HepG2 (cell line): ENCODE measurements at regions of chr6 and their contacts with region 1.

Region 1: DNA sequence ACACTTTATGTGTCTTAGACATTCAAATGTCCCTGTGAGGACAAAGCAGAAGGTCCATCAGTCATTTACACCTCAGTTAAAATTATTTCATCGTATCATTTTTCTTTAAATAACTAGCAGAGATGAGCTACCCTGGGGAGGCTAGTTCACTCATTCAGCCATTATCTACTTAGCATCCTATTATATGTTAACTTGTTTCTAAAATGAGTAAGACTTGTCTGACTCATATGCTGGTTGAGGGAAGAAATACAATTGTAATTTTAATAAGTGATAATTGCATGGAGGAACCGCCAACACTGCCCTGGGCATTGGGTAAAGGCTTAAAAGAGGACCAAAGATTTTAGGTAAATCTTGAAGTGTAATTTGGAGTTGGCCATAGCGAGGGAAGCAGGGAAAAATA is 12.4 kb upstream of the PTPRK start:
- DNase-seq: no peak
- ATAC-seq: no peak
- H3K4me3 ChIP-seq: no peak overlapping the region
- H3K27ac ChIP-seq: no peak overlapping the region
- H3K4me1 ChIP-seq: no peaks in the 10 kb centered on the region
- H3K27me3 ChIP-seq: peaks cover 0 to 9% of the 10 kb centered on the region in 2 experiments; a peak in 1 of 5 replicates
- CTCF ChIP-seq: no peak
- EP300 ChIP-seq: no peak
- POLR2A ChIP-seq: no peak
- RAD21 ChIP-seq: no peak

Region 2: GRCh38 chr6:127869772-127870404 is 662.9 kb before region 1 on chr6:
- CTCF ChIA-PET with region 1: no interaction called
- POLR2A ChIA-PET with region 1: no interaction called
- in situ Hi-C with region 1: loop called (anchors 10 kb)
- intact Hi-C with region 1: no loop called
- DNase-seq: no peak
- ATAC-seq: no peak
- H3K4me3 ChIP-seq: no peak overlapping the region
- H3K27ac ChIP-seq: no peak overlapping the region
- H3K4me1 ChIP-seq: peaks cover 5% of the 10 kb centered on the region
- H3K27me3 ChIP-seq: no peaks in the 10 kb centered on the region
- CTCF ChIP-seq: no peak
- EP300 ChIP-seq: no peak
- POLR2A ChIP-seq: no peak
- RAD21 ChIP-seq: no peak

Region 3: GRCh38 chr6:128266946-128267345 is 265.9 kb before region 1 on chr6:
- CTCF ChIA-PET with region 1: no interaction called
- POLR2A ChIA-PET with region 1: no interaction called
- in situ Hi-C with region 1: no loop called
- intact Hi-C with region 1: no loop called
- DNase-seq: no peak
- ATAC-seq: no peak
- H3K4me3 ChIP-seq: no peak overlapping the region
- H3K27ac ChIP-seq: no peak overlapping the region
- H3K4me1 ChIP-seq: no peaks in the 10 kb centered on the region
- H3K27me3 ChIP-seq: no peaks in the 10 kb centered on the region
- CTCF ChIP-seq: no peak
- EP300 ChIP-seq: no peak
- POLR2A ChIP-seq: no peak
- RAD21 ChIP-seq: no peak

Region 4: DNA sequence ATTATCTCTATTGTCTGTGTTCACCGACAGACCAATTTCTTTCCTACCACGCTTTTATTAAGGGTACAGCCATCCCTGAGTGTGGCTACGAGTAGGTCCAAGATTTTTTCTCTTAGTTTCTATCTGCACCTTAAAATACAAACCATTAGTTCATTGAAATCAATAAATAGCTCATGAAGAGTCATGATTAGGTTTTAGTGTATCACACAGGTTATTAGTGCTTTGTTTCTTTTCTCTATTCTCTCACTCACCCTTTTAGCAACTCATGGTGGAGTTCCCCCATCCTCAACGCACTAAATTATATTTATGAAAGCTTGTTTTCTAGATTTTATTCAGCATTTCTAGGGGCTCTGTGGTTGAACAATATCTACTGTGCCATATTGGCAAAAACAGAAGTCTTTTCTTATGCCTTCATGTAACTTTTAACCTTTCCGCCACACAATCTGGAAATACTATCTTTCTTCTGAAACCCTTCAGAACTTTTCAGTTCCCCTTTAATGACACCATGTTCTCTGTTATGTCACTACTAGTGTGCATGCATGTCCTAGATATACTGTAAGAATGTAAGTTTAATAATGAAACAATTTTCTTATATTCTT is 221.9 kb after region 1 on chr6:
- CTCF ChIA-PET with region 1: no interaction called
- POLR2A ChIA-PET with region 1: no interaction called
- in situ Hi-C with region 1: no loop called
- intact Hi-C with region 1: no loop called
- DNase-seq: no peak
- ATAC-seq: no peak
- H3K4me3 ChIP-seq: no peak overlapping the region
- H3K27ac ChIP-seq: no peak overlapping the region
- H3K4me1 ChIP-seq: no peaks in the 10 kb centered on the region
- H3K27me3 ChIP-seq: no peaks in the 10 kb centered on the region
- CTCF ChIP-seq: no peak
- EP300 ChIP-seq: no peak
- POLR2A ChIP-seq: no peak
- RAD21 ChIP-seq: no peak